ENCODE measurements at regions of chr12 and their contacts with region 1.

Region 1: GRCh38 chr12:133181238-133181959 is at the start of gene ZNF268:
- DNase-seq: peak; percentile 92
- H3K4me3 Mint-ChIP-seq: peak within 1 kb of the TSS; percentile 90
- H3K27ac Mint-ChIP-seq: peak within 1 kb of the TSS; percentile 83
- H3K4me1 Mint-ChIP-seq: peaks cover 18% of the 10 kb centered on the region
- H3K27me3 Mint-ChIP-seq: no peaks in the 10 kb centered on the region
- total RNA-seq, gene ZNF268: 15.8 to 18.4 TPM

Region 2: GRCh38 chr12:133080368-133081158 is 100.8 kb before region 1 on chr12 and contains the start of gene ZNF140:
- CTCF ChIA-PET with region 1: interaction called, 13 read pairs
- POLR2A ChIA-PET with region 1: interaction called, 12 read pairs
- DNase-seq: peak; percentile 94
- H3K4me3 Mint-ChIP-seq: no peak within 1 kb of the TSS
- H3K27ac Mint-ChIP-seq: no peak within 1 kb of the TSS
- H3K4me1 Mint-ChIP-seq: peaks cover 13% of the 10 kb centered on the region
- H3K27me3 Mint-ChIP-seq: no peaks in the 10 kb centered on the region
- total RNA-seq, gene ZNF140: 15.8 to 18.8 TPM

Region 3: GRCh38 chr12:133130038-133130807 is 51.2 kb before region 1 on chr12 and contains the starts of genes ZNF10 and ZNF891:
- CTCF ChIA-PET with region 1: interaction called, 5 read pairs
- POLR2A ChIA-PET with region 1: interaction called, 10 read pairs
- DNase-seq: peak; percentile 96
- H3K4me3 Mint-ChIP-seq: peak within 1 kb of the TSS; percentile 95
- H3K27ac Mint-ChIP-seq: peak within 1 kb of the TSS; percentile 100
- H3K4me1 Mint-ChIP-seq: peaks cover 27% of the 10 kb centered on the region
- H3K27me3 Mint-ChIP-seq: no peaks in the 10 kb centered on the region
- total RNA-seq, gene ZNF10: 4.7 to 4.8 TPM
- total RNA-seq, gene ZNF891: 1.6 TPM

Region 4: DNA sequence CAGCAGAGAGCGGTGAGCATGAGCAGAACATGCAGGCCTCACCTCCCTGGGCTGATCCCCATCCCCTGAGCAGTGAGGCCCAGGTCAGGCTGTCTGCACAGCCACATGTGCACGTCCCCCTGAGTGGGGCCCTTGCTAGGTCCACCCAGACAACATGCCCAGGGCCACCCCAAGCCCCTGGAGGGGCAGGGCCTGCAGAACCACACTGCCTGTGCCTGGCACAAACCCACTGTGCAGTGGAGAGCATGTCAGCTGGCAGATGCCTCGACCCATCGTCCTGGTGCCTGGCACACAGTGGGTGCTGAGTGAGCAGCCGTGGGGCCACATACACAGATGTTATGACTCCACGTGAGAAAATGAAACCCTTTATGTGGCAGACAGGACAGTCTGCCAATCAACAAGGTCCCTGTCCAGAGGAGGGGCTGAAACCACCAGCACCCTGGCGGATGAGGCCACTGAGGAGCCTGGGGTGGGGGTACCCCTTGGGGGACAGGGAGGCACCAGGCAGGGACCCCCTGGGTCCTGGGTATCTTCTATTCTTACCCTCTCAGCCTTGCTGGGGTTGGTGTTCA is 46.0 kb after region 1 on chr12:
- CTCF ChIA-PET with region 1: no interaction called
- POLR2A ChIA-PET with region 1: no interaction called
- DNase-seq: no peak
- H3K4me3 Mint-ChIP-seq: no peak overlapping the region
- H3K27ac Mint-ChIP-seq: no peak overlapping the region
- H3K4me1 Mint-ChIP-seq: no peaks in the 10 kb centered on the region
- H3K27me3 Mint-ChIP-seq: no peaks in the 10 kb centered on the region